Lower leg skin (tissue), 4 donors: ENCODE measurements at regions of chr6 and their contacts with region 1.

Region 1: DNA sequence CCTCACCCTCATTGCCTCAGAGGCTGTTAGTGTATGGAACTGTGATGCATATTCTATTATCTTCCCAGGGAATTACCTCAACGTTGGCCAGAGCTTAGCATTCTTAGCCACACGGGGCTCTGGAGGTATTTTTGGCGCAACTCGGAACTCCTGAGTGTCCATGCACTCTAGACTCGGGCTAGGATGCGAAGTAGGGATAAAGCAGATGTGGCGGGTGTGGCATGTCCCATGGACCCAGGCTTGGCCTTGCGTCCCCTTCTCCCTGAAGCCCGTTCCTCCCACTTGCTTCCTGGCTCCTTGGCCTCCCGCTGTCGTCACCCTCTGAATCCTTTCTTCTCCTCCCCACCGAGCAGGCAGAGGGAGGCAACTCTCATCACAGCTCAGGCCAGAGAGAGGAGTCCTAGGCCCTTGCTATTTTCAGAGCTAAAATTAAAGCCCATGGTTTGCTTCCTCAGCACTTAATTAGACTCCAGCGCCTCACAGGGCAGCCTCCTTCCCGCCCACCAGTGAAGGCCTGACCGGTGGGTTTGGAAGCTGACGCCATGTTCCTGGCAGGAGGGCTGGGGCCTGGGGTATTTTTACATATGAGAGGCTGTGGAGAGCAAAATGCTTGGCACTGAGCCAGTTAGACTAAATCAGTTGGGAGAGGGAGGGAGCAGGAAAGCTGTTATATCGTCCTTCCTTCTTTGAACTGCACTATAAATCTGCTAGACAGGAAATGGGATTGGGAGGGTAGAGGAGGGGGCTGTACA is 138.7 kb downstream of the FOXO3 start:
- DNase-seq: peak in 1 of 2 donors; percentile 75
- H3K4me3 ChIP-seq: no peak overlapping the region
- CTCF ChIP-seq: no peak
- POLR2A ChIP-seq: no peak

Region 2: GRCh38 chr6:107009499-107009898 is 1690.0 kb before region 1 on chr6:
- intact Hi-C with region 1: loop called (anchors 5 kb)
- DNase-seq: no peak
- H3K4me3 ChIP-seq: no peak overlapping the region
- CTCF ChIP-seq: no peak
- POLR2A ChIP-seq: no peak